Calu3 (cell line): ENCODE measurements at regions of chr3 and their contacts with region 1.

Region 1: DNA sequence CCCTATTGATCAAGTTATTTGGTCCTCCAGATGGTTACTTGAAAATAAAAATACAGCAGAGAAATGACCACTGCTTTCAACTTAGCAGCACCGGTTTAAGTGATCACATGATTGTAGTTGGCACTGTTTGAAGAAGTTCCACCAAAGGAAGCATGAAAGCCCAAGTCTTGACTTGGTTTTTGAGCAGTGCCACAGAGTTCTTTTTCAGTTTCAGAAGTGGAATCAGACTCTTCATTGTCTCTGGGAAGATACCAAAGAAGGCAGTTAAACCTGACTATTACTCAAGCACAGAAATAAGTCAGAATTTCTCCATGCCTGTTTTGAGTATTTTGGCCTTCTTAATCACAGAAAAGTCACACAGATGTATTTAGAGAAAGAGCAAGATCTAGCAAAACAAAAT is 66.7 kb downstream of the BBX start:
- DNase-seq: no peak
- H3K4me3 Mint-ChIP-seq: no peak overlapping the region
- H3K27ac Mint-ChIP-seq: no peak overlapping the region
- H3K4me1 Mint-ChIP-seq: no peaks in the 10 kb centered on the region
- H3K27me3 Mint-ChIP-seq: no peaks in the 10 kb centered on the region
- CTCF ChIP-seq: no peak

Region 2: GRCh38 chr3:107627962-107628542 is 38.6 kb after region 1 on chr3:
- CTCF ChIA-PET with region 1: no interaction called
- intact Hi-C with region 1: loop called (anchors 5 kb)
- DNase-seq: no peak
- H3K4me3 Mint-ChIP-seq: no peak overlapping the region
- H3K27ac Mint-ChIP-seq: no peak overlapping the region
- H3K4me1 Mint-ChIP-seq: no peaks in the 10 kb centered on the region
- H3K27me3 Mint-ChIP-seq: no peaks in the 10 kb centered on the region
- CTCF ChIP-seq: no peak